WTC11 (cell line): ENCODE measurements at regions of chr12 and their contacts with region 1.

Region 1: GRCh38 chr12:50111693-50112455 is at the start of gene COX14:
- DNase-seq: peak; percentile 99
- ATAC-seq: peak; percentile 88
- H3K4me3 Mint-ChIP-seq: peak within 1 kb of the TSS; percentile 99
- H3K27ac Mint-ChIP-seq: peak within 1 kb of the TSS; percentile 99
- H3K4me1 Mint-ChIP-seq: peaks cover 19% of the 10 kb centered on the region
- H3K27me3 Mint-ChIP-seq: no peaks in the 10 kb centered on the region
- CTCF ChIP-seq: peak; percentile 70
- total RNA-seq, gene COX14: 34.0 to 41.4 TPM (median 40.4 TPM) in 3 replicates

Region 2: DNA sequence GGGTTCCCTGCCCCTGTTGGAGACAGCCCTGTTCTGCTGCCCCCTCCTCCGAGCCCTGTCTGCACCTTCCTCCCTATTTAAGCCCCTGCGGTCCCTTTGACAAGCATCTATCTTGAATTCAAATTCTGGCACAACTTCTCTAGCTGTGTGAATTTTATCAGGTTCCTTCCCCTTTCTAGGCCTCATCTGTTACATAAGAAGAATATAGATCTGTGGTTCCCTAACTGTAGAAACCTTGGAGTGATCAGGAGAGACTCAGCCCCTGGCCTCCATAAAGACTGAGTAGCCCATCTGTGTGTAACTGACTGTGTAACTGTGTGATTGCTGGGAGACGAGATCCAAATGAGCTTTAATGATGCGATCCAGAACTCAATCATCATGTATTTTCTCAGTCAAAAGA is 73.5 kb before region 1 on chr12:
- CTCF ChIA-PET with region 1: interaction called, 15 read pairs
- POLR2A ChIA-PET with region 1: no interaction called
- DNase-seq: no peak
- ATAC-seq: no peak
- H3K4me3 Mint-ChIP-seq: no peak overlapping the region
- H3K27ac Mint-ChIP-seq: no peak overlapping the region
- H3K4me1 Mint-ChIP-seq: peaks cover 4% of the 10 kb centered on the region
- H3K27me3 Mint-ChIP-seq: peaks cover 7% of the 10 kb centered on the region; the same call in 1 of the 2 replicates
- CTCF ChIP-seq: no peak

Region 3: DNA sequence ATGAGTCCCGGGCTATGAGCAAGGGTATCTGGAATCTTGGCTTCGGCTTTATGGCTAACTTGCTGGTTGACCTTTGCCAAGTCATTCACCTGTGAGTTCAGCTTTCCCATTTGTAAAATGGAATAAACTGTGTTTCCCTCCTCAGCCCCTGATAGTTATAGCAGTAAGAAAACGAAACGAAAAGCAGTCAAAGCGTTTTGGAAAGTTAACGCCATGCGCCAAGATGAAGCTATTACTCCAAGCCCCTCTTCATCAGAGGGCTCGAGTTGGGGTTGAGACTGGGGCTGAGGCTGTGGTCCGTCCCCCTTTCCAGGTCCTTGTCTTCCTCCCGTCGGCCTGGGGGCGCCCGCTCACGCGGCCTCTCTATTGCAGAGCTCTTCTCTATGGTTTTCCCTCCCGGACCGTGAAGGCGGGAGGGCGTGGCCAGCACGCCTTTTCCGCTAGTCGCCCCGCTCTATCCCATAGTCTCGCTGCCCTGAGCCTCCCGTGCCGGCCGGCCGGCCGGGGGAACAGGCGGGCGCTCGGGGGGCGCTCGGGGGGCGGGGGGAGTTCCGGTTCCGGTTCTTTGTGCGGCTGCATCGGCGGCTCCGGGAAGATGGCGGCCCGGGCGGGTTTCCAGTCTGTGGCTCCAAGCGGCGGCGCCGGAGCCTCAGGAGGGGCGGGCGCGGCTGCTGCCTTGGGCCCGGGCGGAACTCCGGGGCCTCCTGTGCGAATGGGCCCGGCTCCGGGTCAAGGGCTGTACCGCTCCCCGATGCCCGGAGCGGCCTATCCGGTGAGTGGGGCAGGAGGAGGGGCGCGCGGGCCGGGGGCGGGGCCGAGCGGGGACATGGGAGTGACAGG is 26.9 kb before region 1 on chr12 and contains the start of gene SMARCD1:
- CTCF ChIA-PET with region 1: interaction called, 78 read pairs
- POLR2A ChIA-PET with region 1: interaction called, 12 read pairs
- DNase-seq: peak; percentile 96
- ATAC-seq: peak; percentile 93
- H3K4me3 Mint-ChIP-seq: peak within 1 kb of the TSS; percentile 89
- H3K27ac Mint-ChIP-seq: peak within 1 kb of the TSS; percentile 94
- H3K4me1 Mint-ChIP-seq: peaks cover 24% of the 10 kb centered on the region
- H3K27me3 Mint-ChIP-seq: peaks cover 26% of the 10 kb centered on the region
- CTCF ChIP-seq: no peak
- total RNA-seq, gene SMARCD1: 150 to 165 TPM (median 152 TPM) in 3 replicates

Region 4: GRCh38 chr12:50162230-50162629 is 50.4 kb after region 1 on chr12:
- CTCF ChIA-PET with region 1: interaction called, 111 read pairs
- POLR2A ChIA-PET with region 1: interaction called, 50 read pairs
- DNase-seq: no peak
- ATAC-seq: no peak
- H3K4me3 Mint-ChIP-seq: no peak overlapping the region
- H3K27ac Mint-ChIP-seq: no peak overlapping the region
- H3K4me1 Mint-ChIP-seq: peaks cover 17% of the 10 kb centered on the region
- H3K27me3 Mint-ChIP-seq: no peaks in the 10 kb centered on the region
- CTCF ChIP-seq: no peak

Region 5: DNA sequence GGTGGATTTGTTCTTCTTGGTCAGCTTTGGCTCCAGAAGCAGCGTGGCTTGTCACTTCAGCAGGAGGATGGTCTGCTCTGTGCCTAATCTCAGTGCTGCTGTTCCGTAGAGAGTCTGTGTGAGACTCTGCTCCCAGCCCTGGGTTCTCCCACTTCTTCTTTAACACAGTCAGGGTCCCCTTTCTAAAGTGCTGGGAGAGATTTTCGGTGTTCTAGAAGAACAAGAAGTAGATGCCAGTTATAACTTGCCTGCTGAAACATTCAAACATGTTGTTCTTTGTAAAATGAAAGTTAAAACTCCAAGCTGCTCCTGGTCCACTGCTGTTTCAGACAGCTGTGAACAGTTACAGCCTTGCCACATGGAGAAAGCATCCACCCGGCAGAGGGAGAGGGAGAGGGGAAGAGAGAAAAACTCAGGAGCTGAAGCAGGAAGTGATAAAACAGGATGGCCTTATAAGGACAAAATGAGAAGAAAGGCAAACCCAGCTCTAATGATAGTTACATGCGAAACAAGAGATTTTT is 110.5 kb after region 1 on chr12:
- CTCF ChIA-PET with region 1: interaction called, 23 read pairs
- POLR2A ChIA-PET with region 1: interaction called, 3 read pairs
- DNase-seq: peak; percentile 31
- ATAC-seq: peak; percentile 93
- H3K4me3 Mint-ChIP-seq: no peak overlapping the region
- H3K27ac Mint-ChIP-seq: no peak overlapping the region
- H3K4me1 Mint-ChIP-seq: peaks cover 20% of the 10 kb centered on the region
- H3K27me3 Mint-ChIP-seq: no peaks in the 10 kb centered on the region
- CTCF ChIP-seq: no peak

Region 6: GRCh38 chr12:50314629-50315312 is 202.9 kb after region 1 on chr12:
- CTCF ChIA-PET with region 1: interaction called, 61 read pairs
- POLR2A ChIA-PET with region 1: interaction called, 8 read pairs
- DNase-seq: peak; percentile 16
- ATAC-seq: peak; percentile 74
- H3K4me3 Mint-ChIP-seq: no peak overlapping the region
- H3K27ac Mint-ChIP-seq: no peak overlapping the region; the same call in 1 of the 2 replicates
- H3K4me1 Mint-ChIP-seq: peaks cover 10% of the 10 kb centered on the region
- H3K27me3 Mint-ChIP-seq: no peaks in the 10 kb centered on the region
- CTCF ChIP-seq: peak; percentile 44; the same call in 1 of the 2 replicates

Region 7: DNA sequence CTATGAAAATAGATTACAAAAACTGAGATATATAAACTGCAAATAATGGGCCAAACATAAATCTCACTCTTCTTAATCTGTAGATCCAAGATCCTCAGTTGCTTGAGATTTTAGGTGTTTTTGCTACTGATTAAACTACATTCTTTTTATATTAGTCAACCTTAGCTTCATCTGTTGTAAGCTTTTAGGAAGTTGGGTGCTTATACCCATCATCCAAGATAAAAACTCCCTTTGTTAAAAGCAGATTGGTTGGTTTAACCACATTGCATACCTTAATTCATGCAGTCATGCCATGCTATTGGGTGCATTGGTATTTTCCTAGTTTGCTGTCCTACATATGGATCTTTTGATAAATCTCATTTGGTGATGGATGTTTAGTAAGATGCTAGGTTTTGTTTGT is 346.7 kb after region 1 on chr12:
- CTCF ChIA-PET with region 1: no interaction called
- POLR2A ChIA-PET with region 1: no interaction called
- DNase-seq: no peak
- ATAC-seq: no peak
- H3K4me3 Mint-ChIP-seq: no peak overlapping the region
- H3K27ac Mint-ChIP-seq: no peak overlapping the region
- H3K4me1 Mint-ChIP-seq: no peaks in the 10 kb centered on the region
- H3K27me3 Mint-ChIP-seq: no peaks in the 10 kb centered on the region
- CTCF ChIP-seq: no peak